ENCODE measurements at regions of chr1 and their contacts with region 1.

Region 1: DNA sequence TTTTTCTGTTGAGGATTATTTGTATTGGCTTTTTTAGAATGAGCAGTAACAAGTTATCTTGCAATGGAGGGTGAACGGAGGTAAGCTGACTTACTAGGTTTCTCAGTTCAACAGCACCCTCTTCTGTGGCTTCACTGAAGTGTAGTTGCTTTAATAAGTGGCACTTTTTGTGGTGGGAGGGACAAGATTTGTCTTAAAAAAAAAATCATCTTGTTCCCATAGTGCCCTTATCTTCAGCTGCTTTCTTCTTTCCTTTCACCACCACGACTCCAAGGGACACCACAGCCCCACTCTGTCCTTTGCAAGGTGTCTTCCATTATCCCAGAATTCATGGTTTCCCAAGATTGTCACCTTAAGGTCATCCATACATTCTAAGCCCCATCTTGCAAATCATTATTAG is 92.9 kb downstream of the PIGK start:
- H3K4me3 Mint-ChIP-seq: peak overlapping the region; percentile 6
- H3K27ac Mint-ChIP-seq: no peak overlapping the region
- H3K4me1 Mint-ChIP-seq: peaks cover 12% of the 10 kb centered on the region
- H3K27me3 Mint-ChIP-seq: no peaks in the 10 kb centered on the region

Region 2: GRCh38 chr1:75991497-75992114 is 1134.7 kb before region 1 on chr1:
- intact Hi-C with region 1: loop called (anchors 5 kb)
- H3K4me3 Mint-ChIP-seq: no peak overlapping the region
- H3K27ac Mint-ChIP-seq: no peak overlapping the region
- H3K4me1 Mint-ChIP-seq: no peaks in the 10 kb centered on the region
- H3K27me3 Mint-ChIP-seq: no peaks in the 10 kb centered on the region

Region 3: GRCh38 chr1:76154206-76154956 is 971.9 kb before region 1 on chr1:
- intact Hi-C with region 1: loop called (anchors 1 kb)
- H3K4me3 Mint-ChIP-seq: peak overlapping the region; percentile 78
- H3K27ac Mint-ChIP-seq: peak overlapping the region; percentile 85
- H3K4me1 Mint-ChIP-seq: peaks cover 8% of the 10 kb centered on the region
- H3K27me3 Mint-ChIP-seq: no peaks in the 10 kb centered on the region

Region 4: GRCh38 chr1:76330991-76331603 is 795.2 kb before region 1 on chr1:
- intact Hi-C with region 1: loop called (anchors 5 kb)
- H3K4me3 Mint-ChIP-seq: no peak overlapping the region
- H3K27ac Mint-ChIP-seq: no peak overlapping the region
- H3K4me1 Mint-ChIP-seq: no peaks in the 10 kb centered on the region
- H3K27me3 Mint-ChIP-seq: no peaks in the 10 kb centered on the region

Region 5: GRCh38 chr1:76799700-76800099 is 326.6 kb before region 1 on chr1:
- intact Hi-C with region 1: no loop called
- H3K4me3 Mint-ChIP-seq: no peak overlapping the region
- H3K27ac Mint-ChIP-seq: no peak overlapping the region
- H3K4me1 Mint-ChIP-seq: no peaks in the 10 kb centered on the region
- H3K27me3 Mint-ChIP-seq: no peaks in the 10 kb centered on the region

Region 6: DNA sequence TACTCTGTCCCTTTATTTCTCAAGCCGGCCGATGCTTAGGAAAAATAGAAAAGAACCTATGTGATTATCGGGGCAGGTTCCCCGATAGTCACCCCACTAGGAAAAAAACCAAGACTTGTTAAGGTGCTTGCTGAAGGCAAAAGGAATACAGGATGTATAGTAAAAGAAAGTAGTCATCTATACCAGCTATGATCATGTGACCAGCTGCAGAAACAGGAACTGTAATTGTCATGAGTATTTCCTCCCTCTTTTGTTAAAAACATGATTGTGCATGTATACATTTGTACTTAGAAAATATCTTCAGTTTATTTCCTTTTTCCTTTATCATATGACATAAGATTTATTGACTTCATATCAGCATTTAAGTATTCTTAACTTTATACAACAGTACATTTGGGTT is 62.5 kb after region 1 on chr1:
- intact Hi-C with region 1: no loop called
- H3K4me3 Mint-ChIP-seq: no peak overlapping the region
- H3K27ac Mint-ChIP-seq: no peak overlapping the region
- H3K4me1 Mint-ChIP-seq: peaks cover 15% of the 10 kb centered on the region
- H3K27me3 Mint-ChIP-seq: no peaks in the 10 kb centered on the region

Measured in dendritic cell treated with granulocyte-macrophage colony-stimulating factor and Interleukin-4, amounts not matched to agents 40 ng/mL and 50 ng/mL, for 4 days (primary cell).